CD8-positive, alpha-beta T cell (primary cell): ENCODE measurements at regions of chr16 and their contacts with region 1.

Region 1: DNA sequence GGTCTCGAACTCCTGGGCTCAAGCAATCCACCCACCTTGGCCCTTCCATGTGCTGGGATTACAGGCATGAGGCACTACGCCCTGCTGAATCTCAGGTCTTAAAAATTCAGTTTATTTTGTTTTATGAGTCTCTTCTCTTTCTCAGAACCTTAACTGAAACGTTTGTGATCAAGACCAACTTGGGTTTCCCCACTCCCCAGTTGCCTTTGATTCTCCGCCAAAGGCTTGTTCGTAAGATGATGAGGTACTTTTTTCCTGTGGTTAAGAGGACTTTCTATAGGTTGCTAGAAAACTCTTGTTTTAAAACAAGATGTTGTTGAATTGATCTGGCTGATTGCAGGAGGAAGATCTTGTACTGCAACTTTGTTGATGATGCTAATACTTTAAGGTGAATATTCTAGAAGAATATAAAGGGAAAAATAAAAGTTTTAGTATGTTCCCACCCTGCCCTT is 11.7 kb downstream of the ABCC1 start:
- DNase-seq: peak; percentile 34 to 95 (median 69)
- ATAC-seq: peak; percentile 77
- H3K4me3 ChIP-seq: peak overlapping the region; percentile 38 to 46
- H3K4me3 Mint-ChIP-seq: peak overlapping the region; percentile 81
- H3K27ac ChIP-seq: peak overlapping the region; percentile 80 to 92
- H3K27ac Mint-ChIP-seq: peak overlapping the region; percentile 95
- H3K4me1 ChIP-seq: peaks cover 58% of the 10 kb centered on the region
- H3K4me1 Mint-ChIP-seq: peaks cover 79% of the 10 kb centered on the region
- H3K27me3 ChIP-seq: no peaks in the 10 kb centered on the region
- H3K27me3 Mint-ChIP-seq: no peaks in the 10 kb centered on the region
- CTCF ChIP-seq: no peak

Region 2: DNA sequence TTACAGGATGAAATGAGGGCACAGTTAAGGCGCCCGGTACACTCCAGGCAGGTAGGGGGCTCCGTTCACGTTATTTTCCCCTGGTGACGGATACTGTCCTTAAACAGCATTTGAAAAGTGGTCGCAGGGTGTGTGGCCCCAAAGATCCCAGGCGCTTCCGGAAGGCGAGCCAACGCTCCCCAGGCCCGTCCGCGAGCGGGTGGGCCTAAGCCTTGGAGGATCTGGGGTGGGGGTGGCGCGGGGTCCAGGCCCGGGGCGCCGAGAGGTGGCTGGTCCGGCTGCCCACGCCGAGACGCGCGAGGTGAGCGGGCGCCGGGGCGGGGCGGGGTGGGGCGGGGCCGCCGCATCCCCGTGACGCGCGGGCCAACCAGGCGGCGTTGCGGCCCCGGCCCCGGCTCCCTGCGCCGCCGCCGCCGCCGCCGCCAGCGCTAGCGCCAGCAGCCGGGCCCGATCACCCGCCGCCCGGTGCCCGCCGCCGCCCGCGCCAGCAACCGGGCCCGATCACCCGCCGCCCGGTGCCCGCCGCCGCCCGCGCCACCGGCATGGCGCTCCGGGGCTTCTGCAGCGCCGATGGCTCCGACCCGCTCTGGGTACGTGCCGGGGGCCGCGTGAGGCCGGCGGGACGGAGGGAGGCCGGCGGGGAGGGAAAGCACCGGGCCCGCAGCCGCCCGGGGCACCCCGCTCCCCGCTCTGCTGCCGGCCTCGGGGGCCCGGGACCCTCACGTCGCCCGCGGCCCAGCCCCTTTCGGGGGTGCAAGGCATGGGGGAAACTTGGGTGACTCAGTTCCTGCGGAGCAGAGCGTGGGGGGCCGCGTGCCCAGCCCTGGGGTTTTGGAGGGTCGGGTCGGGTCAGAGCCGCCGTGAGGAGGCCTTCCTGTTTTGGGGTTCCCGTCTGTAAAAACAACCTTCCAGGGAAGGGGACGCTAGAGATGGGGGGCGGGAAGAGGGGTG is 11.6 kb before region 1 on chr16 and contains the start of gene ABCC1:
- CTCF ChIA-PET with region 1: interaction called, 6 read pairs
- POLR2A ChIA-PET with region 1: interaction called, 7 read pairs
- intact Hi-C with region 1: loop called (anchors 1 kb)
- DNase-seq: peak; percentile 16 to 86 (median 72)
- ATAC-seq: peak; percentile 70
- H3K4me3 ChIP-seq: peak within 1 kb of the TSS; percentile 73 to 78
- H3K4me3 Mint-ChIP-seq: peak within 1 kb of the TSS; percentile 95
- H3K27ac ChIP-seq: peak within 1 kb of the TSS; percentile 75 to 77
- H3K27ac Mint-ChIP-seq: peak within 1 kb of the TSS; percentile 96
- H3K4me1 ChIP-seq: peaks cover 27% of the 10 kb centered on the region
- H3K4me1 Mint-ChIP-seq: peaks cover 34% of the 10 kb centered on the region
- H3K27me3 ChIP-seq: no peaks in the 10 kb centered on the region
- H3K27me3 Mint-ChIP-seq: no peaks in the 10 kb centered on the region
- CTCF ChIP-seq: peak; percentile 28
- total RNA-seq, gene ABCC1: 41.1 to 41.2 TPM

Region 3: GRCh38 chr16:15975172-15975571 is 14.1 kb after region 1 on chr16:
- CTCF ChIA-PET with region 1: no interaction called
- POLR2A ChIA-PET with region 1: no interaction called
- intact Hi-C with region 1: loop called in 1 of 2 experiments (anchors 1 kb)
- DNase-seq: no peak
- ATAC-seq: no peak
- H3K4me3 ChIP-seq: no peak overlapping the region
- H3K4me3 Mint-ChIP-seq: no peak overlapping the region
- H3K27ac ChIP-seq: no peak overlapping the region
- H3K27ac Mint-ChIP-seq: no peak overlapping the region
- H3K4me1 ChIP-seq: peaks cover 5% of the 10 kb centered on the region
- H3K4me1 Mint-ChIP-seq: peaks cover 40% of the 10 kb centered on the region
- H3K27me3 ChIP-seq: no peaks in the 10 kb centered on the region
- H3K27me3 Mint-ChIP-seq: no peaks in the 10 kb centered on the region
- CTCF ChIP-seq: no peak

Region 4: DNA sequence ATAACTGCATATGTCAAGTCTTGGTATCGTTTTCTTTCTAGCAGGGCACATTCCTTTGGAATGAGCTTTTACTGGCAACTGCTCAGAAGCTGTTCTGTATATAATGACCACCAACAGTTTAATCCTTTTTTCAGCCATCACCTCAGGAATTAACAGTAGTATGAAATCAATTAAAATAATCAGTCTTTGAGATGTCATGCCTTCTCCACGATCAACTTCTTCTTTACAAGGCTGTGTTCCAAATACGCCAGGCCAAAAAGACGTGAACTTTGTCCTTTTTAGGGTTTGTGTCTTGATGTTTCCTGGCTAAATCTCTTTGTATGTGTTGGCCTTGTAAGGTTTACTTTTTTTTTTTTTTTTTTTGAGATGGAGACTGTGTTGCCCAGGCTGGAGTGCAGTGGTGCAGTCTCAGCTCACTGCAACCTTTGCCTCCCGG is 43.2 kb after region 1 on chr16:
- CTCF ChIA-PET with region 1: no interaction called
- POLR2A ChIA-PET with region 1: no interaction called
- intact Hi-C with region 1: loop called in 1 of 2 experiments (anchors 5 kb)
- DNase-seq: no peak
- ATAC-seq: no peak
- H3K4me3 ChIP-seq: no peak overlapping the region
- H3K4me3 Mint-ChIP-seq: no peak overlapping the region
- H3K27ac ChIP-seq: no peak overlapping the region
- H3K27ac Mint-ChIP-seq: no peak overlapping the region
- H3K4me1 ChIP-seq: peaks cover 9% of the 10 kb centered on the region
- H3K4me1 Mint-ChIP-seq: peaks cover 30% of the 10 kb centered on the region
- H3K27me3 ChIP-seq: no peaks in the 10 kb centered on the region
- H3K27me3 Mint-ChIP-seq: no peaks in the 10 kb centered on the region
- CTCF ChIP-seq: no peak

Region 5: DNA sequence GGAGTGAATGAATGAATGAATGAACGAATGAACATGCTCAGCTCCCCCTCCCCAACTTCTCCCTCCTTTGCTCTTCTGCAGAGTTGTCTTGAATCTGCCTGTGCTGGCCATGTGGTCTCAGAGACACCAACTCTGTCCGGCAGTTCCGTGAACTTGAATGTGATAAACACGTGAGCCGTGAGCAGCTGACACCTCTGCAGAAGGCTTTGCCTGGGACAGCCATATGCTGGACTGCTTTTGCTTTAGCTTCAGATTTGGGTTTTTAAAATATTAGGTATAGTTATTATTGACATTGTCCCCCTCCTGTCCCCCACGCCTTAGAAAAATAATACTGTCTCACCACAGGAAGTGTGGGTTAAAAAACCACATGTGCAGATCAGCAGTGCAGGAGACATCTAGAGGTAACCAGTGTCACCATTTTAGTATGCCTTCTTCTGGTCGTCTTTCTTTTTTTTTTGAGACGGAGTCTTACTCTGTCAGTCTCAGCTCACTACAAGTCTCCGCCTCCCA is 72.2 kb after region 1 on chr16:
- CTCF ChIA-PET with region 1: interaction called, 4 read pairs
- POLR2A ChIA-PET with region 1: no interaction called
- intact Hi-C with region 1: loop called in 1 of 2 experiments (anchors 5 kb)
- DNase-seq: peak in 6 of 9 experiments; percentile 9 to 79 (median 41)
- ATAC-seq: peak; percentile 83
- H3K4me3 ChIP-seq: no peak overlapping the region
- H3K4me3 Mint-ChIP-seq: peak overlapping the region; percentile 37
- H3K27ac ChIP-seq: peak overlapping the region in 1 of 2 experiments; percentile 60
- H3K27ac Mint-ChIP-seq: peak overlapping the region; percentile 86
- H3K4me1 ChIP-seq: peaks cover 19% of the 10 kb centered on the region
- H3K4me1 Mint-ChIP-seq: peaks cover 23% of the 10 kb centered on the region
- H3K27me3 ChIP-seq: no peaks in the 10 kb centered on the region
- H3K27me3 Mint-ChIP-seq: no peaks in the 10 kb centered on the region
- CTCF ChIP-seq: no peak